BJ (cell line): ENCODE measurements at regions of chr3 and their contacts with region 1.

Region 1: DNA sequence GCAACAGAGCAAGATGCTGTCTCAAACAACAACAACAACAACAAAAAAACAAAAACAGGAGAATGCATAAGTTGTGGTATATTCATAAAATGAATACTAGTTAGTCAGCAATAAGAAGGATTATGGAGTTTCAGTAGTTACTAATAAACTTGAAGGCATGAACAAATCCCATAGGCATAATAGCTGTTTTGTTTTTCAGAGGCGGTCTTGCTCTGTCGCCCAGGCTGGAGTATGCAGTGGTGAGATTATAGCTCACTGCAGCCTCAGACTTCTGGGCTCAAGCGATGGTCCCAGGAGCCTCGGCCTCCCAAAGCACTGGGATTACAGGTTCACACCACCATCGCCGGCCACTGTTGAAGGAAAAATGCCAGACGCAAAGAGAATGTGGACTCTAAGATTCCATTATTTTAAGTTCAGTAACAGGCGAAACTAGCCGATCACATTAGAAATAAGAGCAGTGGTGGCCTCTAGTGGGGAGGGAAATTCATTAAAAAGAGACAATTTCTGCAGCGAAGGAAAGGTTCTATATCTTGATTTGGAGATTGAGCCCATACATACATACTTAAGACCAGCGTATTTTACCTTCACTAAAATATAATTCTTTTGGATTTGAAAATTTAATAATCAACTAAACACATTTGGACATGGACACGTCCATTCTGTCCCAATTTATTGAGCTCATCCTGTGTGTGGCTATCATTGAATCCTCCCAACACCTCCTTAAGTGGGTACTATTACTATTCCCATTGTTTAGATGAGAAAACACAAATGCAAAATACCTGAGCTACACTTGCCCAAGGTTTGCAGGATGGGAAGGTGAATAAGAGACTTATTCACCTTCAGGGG is 27.4 kb upstream of the HDAC11 start:
- DNase-seq: no peak
- H3K4me3 ChIP-seq: no peak overlapping the region
- H3K27me3 ChIP-seq: peaks cover 2% of the 10 kb centered on the region
- CTCF ChIP-seq: peak; percentile 68

Region 2: DNA sequence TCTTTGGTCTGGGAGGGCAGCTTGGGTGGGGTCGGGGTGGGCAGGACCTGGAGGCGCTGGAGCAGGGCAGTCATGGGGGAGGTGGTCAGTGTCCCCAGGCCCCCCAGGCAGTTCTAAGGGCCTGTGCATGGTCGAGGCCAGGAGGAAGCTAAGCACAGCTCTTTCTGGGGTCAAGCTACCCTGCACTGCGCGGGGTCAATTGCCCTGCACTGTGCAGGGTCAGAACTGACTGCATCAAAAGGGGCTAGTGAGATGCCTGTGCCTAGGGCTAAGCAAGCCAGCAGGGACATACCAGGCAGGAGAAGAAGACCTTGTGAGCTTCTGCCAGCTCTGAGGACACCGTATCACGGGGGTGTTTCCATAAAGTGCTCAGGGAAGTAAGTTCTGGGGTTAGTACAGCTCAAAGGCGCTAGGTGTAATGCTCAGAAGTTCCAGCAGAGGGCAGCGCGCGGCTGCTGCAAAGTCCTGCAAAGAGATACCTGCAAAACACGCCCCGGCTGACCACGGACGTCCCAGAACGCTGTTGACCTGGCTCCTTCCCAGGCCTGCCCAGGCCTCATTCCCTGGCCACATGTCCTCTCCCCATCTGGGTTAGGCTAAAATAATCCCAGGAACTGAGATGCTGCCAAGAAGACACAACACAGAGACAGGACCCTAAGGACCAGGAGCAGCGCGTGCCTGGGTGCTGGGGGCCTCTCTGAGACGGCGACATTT is 360.7 kb before region 1 on chr3:
- CTCF ChIA-PET with region 1: interaction called, 99 read pairs
- POLR2A ChIA-PET with region 1: no interaction called
- DNase-seq: peak; percentile 8
- H3K4me3 ChIP-seq: no peak overlapping the region
- H3K27me3 ChIP-seq: peaks cover 4% of the 10 kb centered on the region; the same call in 1 of the 2 replicates
- CTCF ChIP-seq: peak; percentile 96

Region 3: GRCh38 chr3:13479581-13480339 is 27.0 kb after region 1 on chr3 and contains the start of gene HDAC11:
- CTCF ChIA-PET with region 1: interaction called, 10 read pairs
- POLR2A ChIA-PET with region 1: no interaction called
- DNase-seq: peak; percentile 78
- H3K4me3 ChIP-seq: peak within 1 kb of the TSS; percentile 68
- H3K27me3 ChIP-seq: 0 out of 2 replicates have a peak, but pooled peaks cover under 1% of the 10 kb centered on the region
- CTCF ChIP-seq: 0 out of 2 replicates have a peak, but pooled peaks have one; percentile 14
- polyA plus RNA-seq, gene HDAC11: 9.8 and 16.0 TPM in 2 replicates

Region 4: DNA sequence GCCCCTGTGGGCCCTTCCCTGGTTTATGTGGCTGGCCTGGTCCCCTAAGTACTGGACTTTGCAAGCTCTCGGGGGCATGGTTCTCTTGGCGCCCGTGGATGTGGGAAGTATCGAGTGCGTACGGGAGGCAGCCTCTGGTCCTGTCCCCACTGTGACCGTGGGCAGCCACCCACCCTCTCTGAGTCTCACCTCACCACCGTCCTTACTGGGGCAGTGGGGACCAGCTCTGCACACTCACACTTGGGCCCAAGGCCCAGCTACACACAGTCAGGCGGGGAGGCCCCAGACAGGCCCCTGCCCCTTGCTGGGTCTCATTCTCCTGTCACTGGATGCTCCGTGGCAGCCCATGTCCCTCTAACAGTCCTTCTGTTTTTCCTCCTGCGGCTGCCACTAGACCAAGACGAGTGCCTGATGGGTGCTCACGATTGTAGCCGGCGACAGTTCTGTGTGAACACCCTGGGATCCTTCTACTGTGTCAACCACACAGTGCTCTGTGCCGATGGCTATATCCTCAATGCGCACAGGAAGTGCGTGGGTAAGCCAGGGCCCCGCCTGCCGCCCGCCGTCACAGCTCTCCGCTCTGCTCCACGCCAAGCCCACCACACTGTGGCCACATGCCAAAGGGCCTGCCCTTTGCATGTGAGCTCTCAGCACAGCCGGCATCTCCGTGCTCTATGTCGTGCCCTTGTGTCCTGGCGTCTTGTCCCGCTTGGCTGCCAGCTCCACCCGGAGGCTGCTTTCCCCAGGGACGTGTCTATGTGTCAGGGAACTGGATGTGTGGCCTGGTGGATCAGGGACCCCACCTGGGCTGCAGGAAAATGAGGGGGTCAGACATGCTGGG is 168.9 kb after region 1 on chr3:
- CTCF ChIA-PET with region 1: no interaction called
- POLR2A ChIA-PET with region 1: no interaction called
- DNase-seq: no peak
- H3K4me3 ChIP-seq: no peak overlapping the region
- H3K27me3 ChIP-seq: no peaks in the 10 kb centered on the region
- CTCF ChIP-seq: no peak